ENCODE measurements at regions of chr1 and their contacts with region 1.

Region 1: GRCh38 chr1:36175137-36176095 is 19.5 kb downstream of the MAP7D1 start:
- DNase-seq: no peak
- H3K4me3 ChIP-seq: no peak overlapping the region
- H3K4me3 Mint-ChIP-seq: no peak overlapping the region
- H3K27ac ChIP-seq: peak overlapping the region; percentile 30
- H3K27ac Mint-ChIP-seq: peak overlapping the region in 4 of 7 donors; percentile 22 to 81 (median 42)
- H3K4me1 ChIP-seq: no peaks in the 10 kb centered on the region
- H3K4me1 Mint-ChIP-seq: peaks cover 7 to 13% (median 8%) of the 10 kb centered on the region in 4 donors
- H3K27me3 ChIP-seq: no peaks in the 10 kb centered on the region
- H3K27me3 Mint-ChIP-seq: no peaks in the 10 kb centered on the region

Region 2: GRCh38 chr1:36160949-36161485 is 14.4 kb before region 1 on chr1:
- CTCF ChIA-PET with region 1: interaction called, 6 read pairs
- POLR2A ChIA-PET with region 1: interaction called, 20 read pairs
- intact Hi-C with region 1: no loop called
- DNase-seq: peak; percentile 57 to 72 (median 67)
- H3K4me3 ChIP-seq: peak overlapping the region; percentile 53 to 62
- H3K4me3 Mint-ChIP-seq: peak overlapping the region; percentile 80 to 91 (median 86)
- H3K27ac ChIP-seq: peak overlapping the region; percentile 78
- H3K27ac Mint-ChIP-seq: peak overlapping the region; percentile 93 to 99 (median 98)
- H3K4me1 ChIP-seq: peaks cover 75% of the 10 kb centered on the region
- H3K4me1 Mint-ChIP-seq: peaks cover 53 to 83% (median 66%) of the 10 kb centered on the region in 4 donors
- H3K27me3 ChIP-seq: no peaks in the 10 kb centered on the region
- H3K27me3 Mint-ChIP-seq: no peaks in the 10 kb centered on the region

Region 3: DNA sequence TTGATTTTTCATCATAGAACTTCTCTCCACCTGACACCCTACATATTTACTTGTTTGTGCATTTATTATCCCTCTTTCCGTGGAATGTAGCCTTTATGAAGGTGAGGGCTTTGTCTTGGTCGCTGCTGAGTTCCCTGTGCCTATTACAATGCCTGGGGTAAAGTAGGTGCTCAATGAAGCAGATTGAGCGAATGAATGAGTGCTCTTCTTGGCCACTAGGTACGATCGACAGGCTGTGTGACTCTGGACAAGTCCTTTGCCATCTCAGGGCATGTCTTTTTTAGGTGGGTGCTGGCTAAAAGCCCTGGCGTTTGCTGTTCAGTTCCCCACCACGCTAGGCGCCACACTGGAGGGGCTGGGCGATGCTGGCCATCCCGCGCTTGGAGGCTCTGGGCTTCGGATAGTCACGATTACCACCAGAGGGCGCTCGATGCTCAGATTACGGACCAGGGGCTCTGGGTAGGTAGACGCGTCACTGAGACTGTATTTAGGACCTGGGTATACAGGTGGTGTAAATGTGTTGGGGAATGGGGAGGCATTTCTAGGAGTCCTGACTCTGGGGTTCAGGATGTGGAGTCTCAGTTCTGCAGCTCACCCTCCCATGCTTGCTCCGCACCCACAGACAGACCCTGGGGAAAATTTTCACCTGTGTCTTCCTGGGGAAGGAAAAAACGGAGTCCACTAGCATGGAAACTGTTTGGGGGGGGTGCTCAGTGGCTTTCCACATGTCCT is 378.3 kb after region 1 on chr1:
- CTCF ChIA-PET with region 1: no interaction called
- POLR2A ChIA-PET with region 1: no interaction called
- intact Hi-C with region 1: no loop called
- DNase-seq: peak; percentile 42 to 55 (median 51)
- H3K4me3 ChIP-seq: no peak overlapping the region
- H3K4me3 Mint-ChIP-seq: no peak overlapping the region
- H3K27ac ChIP-seq: no peak overlapping the region
- H3K27ac Mint-ChIP-seq: no peak overlapping the region
- H3K4me1 ChIP-seq: no peaks in the 10 kb centered on the region
- H3K4me1 Mint-ChIP-seq: no peaks in the 10 kb centered on the region
- H3K27me3 ChIP-seq: peaks cover 14% of the 10 kb centered on the region
- H3K27me3 Mint-ChIP-seq: peaks cover 37 to 42% of the 10 kb centered on the region in 2 donors

Measured in CD4-positive, alpha-beta memory T cell (primary cell).